ENCODE measurements at regions of chr20 and their contacts with region 1.

Region 1: DNA sequence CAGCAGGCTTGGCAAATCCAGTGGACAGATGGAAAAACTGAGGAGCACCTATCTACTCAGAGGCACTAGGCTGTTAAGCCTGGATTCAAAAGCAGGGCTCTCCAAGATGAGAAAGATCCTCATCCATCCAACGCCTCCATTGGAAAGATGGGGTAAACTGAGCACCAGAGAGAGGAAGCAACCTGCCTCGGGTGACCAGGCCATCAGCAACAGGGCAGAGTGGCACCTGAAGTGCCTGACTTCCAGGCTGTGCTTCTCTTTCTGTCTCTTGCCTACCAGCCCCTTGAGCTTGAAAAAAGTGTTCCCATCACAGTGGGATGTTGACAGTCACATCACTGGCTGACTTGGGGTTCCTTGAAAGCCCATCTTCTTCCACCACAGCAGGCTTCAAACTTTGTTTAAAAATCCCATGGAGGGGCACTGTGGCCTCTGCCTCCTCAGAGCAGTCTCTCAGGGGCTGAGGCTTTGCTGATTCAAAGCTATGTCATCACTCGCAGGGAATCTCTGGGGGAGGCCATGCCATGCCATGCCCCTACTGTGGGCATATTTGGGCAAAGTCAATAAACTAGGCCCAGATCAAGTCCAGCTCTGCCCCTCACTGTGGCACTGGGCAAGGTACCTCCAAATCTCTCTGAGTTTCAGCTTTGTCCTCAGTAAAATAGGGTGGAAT is 44.8 kb upstream of the TGM2 start:
- DNase-seq: no peak
- H3K4me3 Mint-ChIP-seq: no peak overlapping the region
- H3K27ac Mint-ChIP-seq: no peak overlapping the region
- H3K4me1 Mint-ChIP-seq: no peaks in the 10 kb centered on the region
- H3K27me3 Mint-ChIP-seq: no peaks in the 10 kb centered on the region
- CTCF ChIP-seq: no peak

Region 2: DNA sequence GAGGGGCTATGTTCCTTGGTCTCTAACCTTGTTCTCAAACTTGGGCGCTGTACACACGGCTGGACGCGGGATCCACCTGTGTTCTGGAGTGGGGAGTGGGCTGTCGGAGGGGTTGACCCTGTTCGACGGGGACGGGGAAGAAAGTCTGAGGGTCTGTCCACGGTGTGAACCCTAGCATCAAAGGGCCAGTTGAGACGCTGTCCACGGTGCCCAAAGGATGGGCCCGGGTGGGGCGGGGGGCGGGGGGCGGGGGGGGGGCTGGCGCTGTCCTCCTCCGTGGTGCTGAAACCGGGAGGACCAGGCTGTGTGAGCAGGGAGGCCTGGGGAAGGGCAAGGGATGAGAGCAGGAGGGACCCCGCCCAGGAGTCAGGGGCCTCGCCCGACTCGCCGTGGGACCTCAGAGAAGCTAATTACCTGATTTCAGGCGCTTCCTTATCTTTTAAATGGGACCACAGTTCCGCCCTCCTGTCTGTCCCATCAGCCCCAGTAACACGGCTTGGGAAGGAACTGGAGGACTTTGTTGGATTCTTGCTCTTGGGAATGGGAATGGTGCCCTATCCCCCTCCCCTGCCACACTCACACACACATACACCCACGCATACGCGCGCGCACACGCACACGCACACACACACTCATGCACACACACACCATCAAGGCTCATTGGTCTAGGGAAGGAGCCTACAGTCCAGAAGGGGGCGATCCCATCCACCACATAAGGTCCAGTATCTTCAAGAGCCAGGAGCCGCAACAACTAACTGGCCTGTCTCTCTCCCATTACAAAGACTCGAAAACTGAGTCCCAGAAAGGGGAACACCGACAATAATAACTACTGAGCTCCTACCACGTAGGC is 308.0 kb before region 1 on chr20:
- CTCF ChIA-PET with region 1: no interaction called
- intact Hi-C with region 1: no loop called
- DNase-seq: peak; percentile 62
- H3K4me3 Mint-ChIP-seq: peak overlapping the region; percentile 52
- H3K27ac Mint-ChIP-seq: no peak overlapping the region
- H3K4me1 Mint-ChIP-seq: peaks cover 7% of the 10 kb centered on the region
- H3K27me3 Mint-ChIP-seq: peaks cover 93% of the 10 kb centered on the region
- CTCF ChIP-seq: peak; percentile 46

Region 3: GRCh38 chr20:38127011-38127621 is 82.8 kb before region 1 on chr20:
- CTCF ChIA-PET with region 1: interaction called, 11 read pairs
- intact Hi-C with region 1: no loop called
- DNase-seq: peak; percentile 64
- H3K4me3 Mint-ChIP-seq: peak overlapping the region; percentile 13
- H3K27ac Mint-ChIP-seq: peak overlapping the region; percentile 40
- H3K4me1 Mint-ChIP-seq: peaks cover 55% of the 10 kb centered on the region
- H3K27me3 Mint-ChIP-seq: no peaks in the 10 kb centered on the region
- CTCF ChIP-seq: no peak